ENCODE measurements at regions of chr18 and their contacts with region 1.

Region 1: GRCh38 chr18:47215554-47216138 is 35.8 kb downstream of the SKOR2 start:
- DNase-seq: peak; percentile 52
- ATAC-seq: peak; percentile 80
- H3K4me3 ChIP-seq: no peak overlapping the region
- H3K27ac ChIP-seq: no peak overlapping the region
- H3K4me1 ChIP-seq: no peaks in the 10 kb centered on the region
- H3K27me3 ChIP-seq: peaks cover 3% of the 10 kb centered on the region
- CTCF ChIP-seq: peak; percentile 57
- POLR2A ChIP-seq: no peak
- RAD21 ChIP-seq: peak; percentile 70

Region 2: DNA sequence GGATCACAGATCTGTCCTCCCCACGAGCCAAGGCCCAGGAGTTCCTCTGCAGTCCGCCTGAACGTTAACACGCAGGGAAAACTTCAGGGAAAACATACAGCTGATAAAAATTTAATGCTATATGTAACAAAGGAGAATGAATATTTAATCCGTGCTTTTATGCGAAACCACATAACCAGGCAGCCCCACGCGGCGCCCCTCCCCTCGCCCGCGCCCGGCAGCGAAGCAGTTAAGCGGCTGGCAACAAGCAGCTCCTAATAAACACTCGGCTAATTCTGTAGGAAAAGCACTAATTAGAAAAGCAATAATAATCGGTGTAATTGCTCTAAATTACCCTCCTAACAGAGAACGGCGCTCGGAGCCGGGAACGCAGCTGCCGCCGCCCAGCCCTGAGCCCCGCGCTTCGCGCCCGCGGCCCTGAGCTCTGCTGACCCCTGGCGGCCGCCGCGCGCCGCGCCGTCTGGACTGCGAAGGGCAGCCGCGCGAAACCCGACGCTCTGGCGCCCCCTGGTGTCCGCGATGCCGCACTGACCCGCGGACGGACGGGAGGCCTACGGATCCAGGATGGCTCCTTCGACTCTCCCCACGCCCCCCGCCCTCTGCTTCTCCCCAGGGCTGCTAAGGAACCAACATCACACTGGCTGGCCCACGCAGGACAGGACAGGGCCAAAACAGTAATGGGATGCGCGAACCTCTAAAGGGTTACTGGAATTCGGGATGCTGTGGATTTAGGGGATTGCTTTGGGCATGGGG is 533.4 kb after region 1 on chr18:
- CTCF ChIA-PET with region 1: interaction called, 9 read pairs
- POLR2A ChIA-PET with region 1: no interaction called
- dilution Hi-C with region 1: no loop called
- in situ Hi-C with region 1: loop called (anchors 10 kb)
- intact Hi-C with region 1: loop called (anchors 1 kb)
- DNase-seq: peak; percentile 37
- ATAC-seq: peak; percentile 100
- H3K4me3 ChIP-seq: peak overlapping the region; percentile 13; the same call in 1 of the 2 replicates
- H3K27ac ChIP-seq: no peak overlapping the region
- H3K4me1 ChIP-seq: no peaks in the 10 kb centered on the region
- H3K27me3 ChIP-seq: peaks cover 2% of the 10 kb centered on the region; the same call in 1 of the 2 replicates
- CTCF ChIP-seq: peak; percentile 100; the same call in 1 of the 2 replicates
- POLR2A ChIP-seq: no peak
- RAD21 ChIP-seq: peak; percentile 86

Region 3: DNA sequence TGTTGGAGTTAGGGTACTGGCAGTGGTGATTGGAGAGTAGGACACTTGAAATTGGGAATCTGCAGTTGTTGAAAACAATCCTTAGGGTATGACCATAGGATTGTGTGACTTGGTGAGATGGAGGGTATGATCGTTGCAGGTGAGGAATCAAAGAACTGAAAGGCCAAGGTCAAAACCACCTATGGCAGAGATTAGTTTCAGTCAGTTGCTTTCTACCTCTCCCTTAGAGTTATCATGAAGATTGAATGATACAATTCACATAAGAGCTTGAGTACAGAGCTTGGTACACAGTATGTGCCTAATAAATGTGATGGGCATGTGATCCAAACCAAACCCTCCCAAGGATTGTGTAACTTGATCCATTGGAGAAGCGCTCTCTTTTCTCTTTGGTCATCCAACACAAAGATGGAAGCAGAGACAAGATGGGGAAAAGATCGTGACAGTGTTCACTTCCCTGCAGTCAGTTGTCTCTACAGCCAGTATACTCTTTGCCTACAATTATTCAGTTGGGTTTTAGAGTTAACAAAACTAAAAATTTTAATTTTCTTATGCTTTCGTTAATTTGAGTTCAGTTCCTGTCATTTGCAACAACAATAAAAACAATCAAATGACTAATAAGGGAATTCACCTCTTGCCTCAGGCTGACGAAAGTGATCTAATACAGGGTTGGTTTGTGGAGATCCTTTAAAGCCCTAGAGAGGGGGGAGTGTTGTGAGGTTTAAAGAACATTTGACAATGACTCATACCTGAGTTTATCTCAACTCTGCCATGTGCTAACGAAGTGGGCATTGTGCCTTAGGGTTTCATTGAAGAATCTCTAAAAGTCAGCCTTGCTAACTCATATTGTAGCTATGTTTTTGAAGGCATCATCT is 729.6 kb after region 1 on chr18:
- CTCF ChIA-PET with region 1: no interaction called
- POLR2A ChIA-PET with region 1: no interaction called
- dilution Hi-C with region 1: no loop called
- in situ Hi-C with region 1: no loop called
- intact Hi-C with region 1: no loop called
- DNase-seq: peak; percentile 25
- ATAC-seq: no peak
- H3K4me3 ChIP-seq: no peak overlapping the region
- H3K27ac ChIP-seq: no peak overlapping the region
- H3K4me1 ChIP-seq: no peaks in the 10 kb centered on the region
- H3K27me3 ChIP-seq: peaks cover 3% of the 10 kb centered on the region; the same call in 1 of the 2 replicates
- CTCF ChIP-seq: no peak
- POLR2A ChIP-seq: no peak
- RAD21 ChIP-seq: no peak

Measured in IMR-90 (cell line).